Activated CD4-positive, alpha-beta memory T cell treated with anti-CD3 and anti-CD28 coated beads, Interleukin-2, amount 10 ng/mL, durations not matched to agents 7 days and 5 days (primary cell): ENCODE measurements at regions of chr15 and their contacts with region 1.

Region 1: DNA sequence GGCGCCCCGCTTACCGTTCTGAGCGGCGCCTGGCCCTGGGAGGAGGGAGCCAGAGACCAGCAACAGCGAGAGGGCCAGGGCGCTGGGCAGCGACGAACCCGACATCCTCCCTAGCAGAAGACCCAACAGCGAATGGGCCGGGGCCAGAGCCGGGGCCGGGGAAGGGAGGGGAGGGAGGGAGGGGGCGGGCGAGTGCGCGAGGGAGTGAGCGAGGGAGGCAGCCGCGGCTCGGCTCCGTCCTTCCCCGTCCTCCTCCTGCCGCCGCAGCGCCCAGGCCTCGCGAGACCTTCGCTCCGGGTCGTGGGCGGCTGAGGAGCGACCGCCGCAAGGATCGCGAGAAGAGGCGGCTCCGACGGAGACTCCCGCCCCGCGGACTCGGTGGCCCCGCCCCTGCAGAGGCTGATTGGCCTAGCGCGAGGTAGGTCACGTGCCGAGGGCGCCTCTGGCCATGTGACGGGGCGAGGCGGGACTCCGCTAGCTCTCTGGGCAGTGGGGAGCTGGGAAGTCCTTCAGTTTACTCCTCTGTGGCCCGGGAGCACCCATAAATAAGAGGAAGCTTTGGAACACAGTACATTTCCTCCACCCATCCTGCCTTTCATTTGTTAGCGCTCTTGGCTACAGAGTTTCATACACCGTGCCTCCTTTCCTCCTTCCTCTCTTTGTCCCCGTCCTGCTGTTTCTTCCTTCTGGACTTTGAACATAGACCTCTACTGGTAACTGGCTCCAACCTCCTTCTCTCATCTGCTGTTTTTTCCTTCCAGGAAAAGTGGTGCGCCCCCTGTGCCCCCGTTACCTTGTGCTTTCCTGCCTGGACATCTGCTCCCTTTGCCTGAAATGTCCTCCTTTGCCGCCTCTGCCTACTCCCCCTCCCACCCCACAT is at the start of gene NPTN:
- DNase-seq: peak; percentile 99
- H3K4me3 Mint-ChIP-seq: peak within 1 kb of the TSS; percentile 85
- H3K27ac Mint-ChIP-seq: peak within 1 kb of the TSS; percentile 48
- H3K4me1 Mint-ChIP-seq: peaks cover 54% of the 10 kb centered on the region
- H3K27me3 Mint-ChIP-seq: peaks cover 25% of the 10 kb centered on the region
- total RNA-seq, gene NPTN: 44.5 to 46.0 TPM

Region 2: GRCh38 chr15:73305331-73306211 is 327.8 kb before region 1 on chr15:
- CTCF ChIA-PET with region 1: interaction called, 12 read pairs
- POLR2A ChIA-PET with region 1: no interaction called
- DNase-seq: peak; percentile 42
- H3K4me3 Mint-ChIP-seq: no peak overlapping the region
- H3K27ac Mint-ChIP-seq: no peak overlapping the region
- H3K4me1 Mint-ChIP-seq: peaks cover 12% of the 10 kb centered on the region
- H3K27me3 Mint-ChIP-seq: no peaks in the 10 kb centered on the region

Region 3: DNA sequence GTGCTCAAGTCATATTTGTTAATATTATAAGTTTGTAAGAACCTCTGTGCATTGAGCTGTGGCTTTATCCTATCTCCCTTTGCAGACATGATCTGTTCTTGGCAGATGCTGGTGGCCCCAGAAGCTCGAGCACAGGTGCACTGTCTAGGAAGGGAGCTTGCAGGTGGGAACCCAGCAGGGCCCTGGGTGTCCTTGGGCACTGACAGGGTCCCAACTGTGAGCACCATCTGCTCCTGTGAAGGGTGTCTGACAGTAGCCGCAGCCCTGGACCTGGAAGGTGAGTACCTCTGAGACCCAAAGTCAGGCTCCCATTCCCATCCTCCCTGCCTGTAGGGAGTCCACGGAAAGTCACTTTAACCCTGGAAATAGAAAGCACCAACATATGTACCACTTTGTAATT is 192.8 kb before region 1 on chr15:
- CTCF ChIA-PET with region 1: no interaction called
- POLR2A ChIA-PET with region 1: no interaction called
- DNase-seq: no peak
- H3K4me3 Mint-ChIP-seq: no peak overlapping the region
- H3K27ac Mint-ChIP-seq: no peak overlapping the region
- H3K4me1 Mint-ChIP-seq: peaks cover 15% of the 10 kb centered on the region
- H3K27me3 Mint-ChIP-seq: peaks cover 31% of the 10 kb centered on the region

Region 4: DNA sequence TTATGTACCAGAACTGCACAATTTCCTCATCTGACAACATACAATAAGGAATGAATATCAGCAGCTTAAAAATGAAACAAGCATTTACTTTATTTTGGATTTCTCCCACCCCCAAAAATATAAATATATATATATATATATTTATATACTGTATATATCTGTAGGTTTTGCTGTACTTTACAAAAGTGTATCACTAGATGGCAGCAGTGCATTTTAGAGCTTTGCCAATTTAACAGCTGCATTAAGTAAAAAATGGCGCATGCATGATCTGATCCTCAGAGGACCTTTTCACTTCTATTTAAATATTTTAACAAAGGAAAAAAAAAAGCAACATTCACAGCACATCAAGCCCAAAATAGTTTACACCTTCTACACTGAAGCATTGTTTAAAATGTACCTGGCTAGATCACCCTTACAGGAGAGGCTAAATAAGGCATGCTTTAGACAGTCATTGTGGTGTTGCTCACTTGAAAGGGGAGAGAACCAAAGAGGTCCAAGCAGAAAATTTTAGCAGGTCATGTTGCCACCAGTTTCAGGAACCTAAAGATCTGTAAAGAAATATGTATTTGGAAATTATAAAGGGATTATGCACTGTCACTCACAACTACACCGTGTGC is 72.7 kb before region 1 on chr15:
- CTCF ChIA-PET with region 1: interaction called, 72 read pairs
- POLR2A ChIA-PET with region 1: interaction called, 8 read pairs
- DNase-seq: no peak
- H3K4me3 Mint-ChIP-seq: no peak overlapping the region
- H3K27ac Mint-ChIP-seq: no peak overlapping the region
- H3K4me1 Mint-ChIP-seq: peaks cover 13% of the 10 kb centered on the region
- H3K27me3 Mint-ChIP-seq: no peaks in the 10 kb centered on the region

Region 5: DNA sequence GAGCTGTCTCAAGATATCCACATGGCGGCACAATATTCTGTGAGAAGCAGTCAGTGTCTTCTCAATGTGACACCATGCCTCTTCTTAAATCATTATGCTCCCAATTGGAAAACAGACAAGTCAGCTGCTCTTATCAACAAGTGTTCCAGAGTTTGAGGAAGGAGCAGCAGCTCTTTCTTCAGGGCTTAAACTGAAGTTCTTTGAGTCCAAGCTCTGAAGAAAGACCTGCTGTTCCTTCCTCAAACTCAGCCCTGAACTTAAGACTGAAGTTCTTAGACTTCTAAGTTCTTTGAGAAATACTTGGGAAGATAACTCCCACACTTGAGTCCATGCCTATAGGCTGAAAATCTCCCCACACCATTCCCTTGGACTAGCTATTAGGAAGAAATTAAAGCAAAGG is 43.6 kb before region 1 on chr15:
- CTCF ChIA-PET with region 1: interaction called, 16 read pairs
- POLR2A ChIA-PET with region 1: interaction called, 4 read pairs
- DNase-seq: no peak
- H3K4me3 Mint-ChIP-seq: no peak overlapping the region
- H3K27ac Mint-ChIP-seq: no peak overlapping the region
- H3K4me1 Mint-ChIP-seq: peaks cover 35% of the 10 kb centered on the region
- H3K27me3 Mint-ChIP-seq: no peaks in the 10 kb centered on the region

Region 6: GRCh38 chr15:73650416-73651126 is 17.2 kb after region 1 on chr15:
- CTCF ChIA-PET with region 1: interaction called, 17 read pairs
- POLR2A ChIA-PET with region 1: no interaction called
- DNase-seq: no peak
- H3K4me3 Mint-ChIP-seq: no peak overlapping the region
- H3K27ac Mint-ChIP-seq: no peak overlapping the region
- H3K4me1 Mint-ChIP-seq: peaks cover 13% of the 10 kb centered on the region
- H3K27me3 Mint-ChIP-seq: peaks cover 17% of the 10 kb centered on the region

Region 7: DNA sequence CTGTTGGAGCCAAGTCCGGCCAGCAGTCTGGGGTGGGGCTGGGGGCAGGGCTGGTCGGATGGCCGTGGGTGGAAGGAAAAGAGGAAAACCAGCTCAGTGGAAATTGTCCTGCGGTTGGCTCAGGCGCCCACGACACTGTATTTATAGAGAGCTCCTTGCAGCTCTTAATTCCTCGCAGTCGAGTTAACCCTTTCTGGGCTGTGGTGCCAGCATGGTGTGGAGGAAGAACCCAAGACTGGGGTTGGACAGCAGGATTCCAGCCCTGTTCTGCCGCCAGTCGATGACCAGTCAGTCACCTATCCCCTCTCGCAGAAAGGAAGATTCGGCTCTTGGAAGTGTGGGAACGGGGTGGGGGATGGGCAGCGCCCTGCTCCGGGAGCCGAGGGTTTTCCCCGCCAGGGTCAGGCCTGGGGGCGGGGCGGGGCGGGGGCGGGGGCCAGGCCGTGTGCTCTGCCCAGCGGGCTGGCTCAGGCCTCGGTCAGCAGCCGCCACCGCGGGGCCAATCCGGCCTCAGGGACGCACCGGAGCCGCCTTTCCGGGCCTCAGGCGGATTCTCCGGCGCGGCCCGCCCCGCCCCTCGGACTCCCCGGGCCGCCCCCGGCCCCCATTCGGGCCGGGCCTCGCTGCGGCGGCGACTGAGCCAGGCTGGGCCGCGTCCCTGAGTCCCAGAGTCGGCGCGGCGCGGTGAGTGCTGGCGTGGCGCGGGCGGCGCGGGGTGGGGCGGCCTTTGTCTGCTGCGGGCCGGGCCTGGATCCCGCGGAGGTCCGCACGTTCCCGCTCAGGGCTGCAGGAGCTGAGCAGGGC is 50.6 kb after region 1 on chr15 and contains the start of gene CD276:
- CTCF ChIA-PET with region 1: interaction called, 10 read pairs
- POLR2A ChIA-PET with region 1: interaction called, 3 read pairs
- DNase-seq: no peak
- H3K4me3 Mint-ChIP-seq: peak within 1 kb of the TSS; percentile 48
- H3K27ac Mint-ChIP-seq: no peak within 1 kb of the TSS
- H3K4me1 Mint-ChIP-seq: peaks cover 10% of the 10 kb centered on the region
- H3K27me3 Mint-ChIP-seq: peaks cover 60% of the 10 kb centered on the region
- total RNA-seq, gene CD276: 0.88 to 1.6 TPM

Region 8: DNA sequence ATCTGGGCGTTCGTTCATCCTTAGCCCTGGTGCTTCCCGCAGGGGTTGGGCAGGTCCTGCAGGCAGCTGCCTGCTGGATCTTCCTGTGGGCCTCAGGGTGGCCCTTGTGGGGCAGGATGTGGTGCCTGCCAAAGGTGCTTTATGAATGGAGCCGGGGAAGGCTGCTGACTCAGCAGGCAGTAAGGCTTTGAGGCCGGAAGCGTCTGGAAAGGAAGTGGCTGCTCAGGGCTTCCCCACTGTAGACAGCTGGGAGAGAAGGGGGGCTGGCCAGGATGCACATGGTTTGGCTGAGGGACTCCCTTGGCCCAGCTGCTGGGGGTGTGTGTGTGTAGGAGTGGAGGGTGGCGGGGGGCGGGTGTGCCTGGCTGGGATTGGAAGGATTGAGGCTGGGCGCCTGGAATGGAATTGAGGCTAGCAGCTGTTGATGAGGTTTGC is 63.7 kb after region 1 on chr15:
- CTCF ChIA-PET with region 1: interaction called, 172 read pairs
- POLR2A ChIA-PET with region 1: interaction called, 20 read pairs
- DNase-seq: peak; percentile 91
- H3K4me3 Mint-ChIP-seq: peak overlapping the region; percentile 33
- H3K27ac Mint-ChIP-seq: peak overlapping the region; percentile 29
- H3K4me1 Mint-ChIP-seq: peaks cover 56% of the 10 kb centered on the region
- H3K27me3 Mint-ChIP-seq: peaks cover 55% of the 10 kb centered on the region